RWPE1 (cell line): ENCODE measurements at regions of chr11 and their contacts with region 1.

Region 1: GRCh38 chr11:62621567-62622470 is at the start of gene B3GAT3:
- DNase-seq: peak; percentile 99
- H3K27ac ChIP-seq: peak within 1 kb of the TSS; percentile 98
- CTCF ChIP-seq: no peak

Region 2: DNA sequence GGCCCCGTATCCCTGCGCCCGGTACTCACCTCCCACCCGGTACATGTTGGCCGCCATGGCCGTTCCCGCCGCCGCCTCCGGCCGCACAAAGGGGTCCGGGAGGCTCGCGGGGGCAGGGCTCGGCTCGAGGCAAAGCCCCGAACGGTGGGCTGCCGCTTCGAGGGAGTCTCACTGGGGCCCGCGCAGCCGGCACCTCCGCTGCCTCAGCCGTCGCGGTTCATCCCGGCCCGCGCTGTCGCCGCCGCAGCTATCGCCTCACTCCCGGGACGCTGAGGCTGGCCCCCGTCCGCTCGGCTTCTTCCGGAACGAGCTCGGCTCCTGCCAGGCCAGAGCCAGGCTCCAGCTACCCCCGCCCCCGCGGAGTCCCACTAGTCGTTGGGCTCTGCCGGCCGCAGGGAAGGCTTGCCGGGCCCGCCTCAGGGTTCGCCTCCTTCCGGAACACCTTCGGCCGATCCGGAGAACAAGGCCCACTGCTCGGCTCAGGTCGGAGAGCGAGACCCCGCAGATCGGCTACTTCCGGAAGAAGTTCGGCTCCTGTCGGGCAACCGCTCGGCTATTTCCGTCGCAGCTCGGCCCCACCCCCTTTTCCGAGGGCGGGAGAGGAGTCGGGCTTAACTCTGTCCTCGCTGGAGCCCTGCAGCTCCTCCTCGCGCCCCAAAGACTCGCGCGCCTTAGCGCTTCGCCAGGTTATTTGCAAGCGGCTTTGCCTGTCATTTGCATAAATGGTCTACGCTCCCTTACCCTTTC is 20.3 kb before region 1 on chr11 and contains the start of gene MTA2:
- CTCF ChIA-PET with region 1: no interaction called
- POLR2A ChIA-PET with region 1: interaction called, 13 read pairs
- DNase-seq: peak; percentile 92
- H3K27ac ChIP-seq: peak within 1 kb of the TSS; percentile 98
- CTCF ChIP-seq: no peak

Region 3: GRCh38 chr11:62652161-62653006 is 30.6 kb after region 1 on chr11:
- CTCF ChIA-PET with region 1: no interaction called
- POLR2A ChIA-PET with region 1: interaction called, 12 read pairs
- DNase-seq: no peak
- H3K27ac ChIP-seq: peak overlapping the region; percentile 91
- CTCF ChIP-seq: no peak

Region 4: GRCh38 chr11:62665075-62665598 is 43.3 kb after region 1 on chr11 and contains the starts of genes C11orf98 and CSKMT:
- CTCF ChIA-PET with region 1: no interaction called
- POLR2A ChIA-PET with region 1: interaction called, 11 read pairs
- DNase-seq: peak; percentile 97
- H3K27ac ChIP-seq: peak within 1 kb of the TSS; percentile 90
- CTCF ChIP-seq: no peak

Region 5: GRCh38 chr11:62958547-62959421 is 337.0 kb after region 1 on chr11:
- CTCF ChIA-PET with region 1: no interaction called
- POLR2A ChIA-PET with region 1: no interaction called
- DNase-seq: no peak
- H3K27ac ChIP-seq: no peak overlapping the region
- CTCF ChIP-seq: no peak